Activated naive CD4-positive, alpha-beta T cell treated with anti-CD3 and anti-CD28 coated beads for 36 hours (primary cell): ENCODE measurements at regions of chr10 and their contacts with region 1.

Region 1: DNA sequence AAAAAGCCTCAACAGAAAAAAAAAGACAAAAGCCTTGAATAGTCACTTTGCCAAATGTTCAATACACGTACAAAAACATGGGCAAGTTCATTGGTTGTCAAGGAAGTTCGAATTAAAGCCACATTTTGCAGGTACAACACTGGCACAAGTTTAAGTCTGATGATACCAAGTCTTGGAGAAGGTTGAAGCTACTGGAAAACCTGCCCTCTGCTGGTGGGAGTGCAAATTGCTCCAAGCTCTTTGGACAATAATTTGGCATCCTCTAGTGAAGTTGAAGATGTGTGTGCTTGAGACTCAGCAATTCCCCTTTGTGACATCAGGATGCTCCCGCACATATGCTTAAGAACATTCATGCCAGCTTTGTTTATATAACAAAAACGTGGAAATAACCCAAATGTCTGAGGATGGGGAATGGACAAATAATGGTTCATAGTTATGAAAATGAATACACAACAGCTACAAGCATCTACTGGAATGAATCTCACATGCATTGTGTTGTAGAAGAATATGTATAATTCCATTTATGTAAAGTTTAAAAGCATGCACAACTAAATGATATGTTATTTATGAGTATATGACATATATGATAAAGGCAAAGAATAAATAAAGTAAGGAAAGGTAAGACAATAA is 120.0 kb upstream of the PLPP4 start:
- DNase-seq: peak; percentile 80
- H3K4me3 Mint-ChIP-seq: no peak overlapping the region
- H3K27ac Mint-ChIP-seq: no peak overlapping the region
- H3K4me1 Mint-ChIP-seq: no peaks in the 10 kb centered on the region
- H3K27me3 Mint-ChIP-seq: peaks cover 12% of the 10 kb centered on the region

Region 2: DNA sequence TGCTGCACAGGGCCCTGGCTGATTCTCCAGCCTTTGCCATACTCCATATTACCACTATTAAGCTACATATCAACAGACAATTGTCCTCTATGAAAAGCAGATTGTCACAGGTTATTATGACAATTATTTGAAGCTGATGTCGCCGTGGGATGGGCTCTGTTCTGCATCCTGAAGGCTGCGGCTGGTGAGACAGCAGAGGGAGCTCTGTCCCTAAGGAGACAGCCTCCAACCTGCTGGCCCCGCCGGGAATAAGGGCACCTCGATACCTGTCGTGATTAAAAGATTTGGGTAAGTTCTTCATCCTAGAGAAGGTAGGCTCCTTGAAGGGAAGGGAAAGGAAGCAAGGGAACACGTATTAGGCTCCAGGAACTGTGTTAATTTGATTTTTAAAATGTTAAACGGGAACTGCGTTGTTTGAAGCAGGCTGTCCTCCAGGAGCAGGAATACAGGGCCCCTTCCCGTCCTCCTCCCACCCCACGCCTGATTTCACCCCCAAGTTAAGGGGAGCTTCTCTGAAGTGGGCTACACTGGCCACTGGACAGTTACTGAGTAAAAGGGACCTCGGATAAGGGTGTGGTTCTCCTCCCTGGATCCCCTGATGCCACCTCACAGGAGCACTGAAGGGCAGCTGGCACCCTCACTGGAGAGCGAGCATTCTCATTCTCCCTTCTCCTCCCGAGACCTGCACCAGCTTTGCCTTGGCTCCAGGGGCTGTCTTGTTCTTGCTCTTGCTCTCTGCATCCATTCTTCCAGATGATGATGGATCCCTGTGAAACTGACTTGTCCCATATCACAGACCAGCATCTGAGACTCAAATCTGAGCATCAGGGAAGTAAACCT is 728.5 kb before region 1 on chr10:
- CTCF ChIA-PET with region 1: no interaction called
- intact Hi-C with region 1: loop called (anchors 1 kb)
- DNase-seq: peak; percentile 68
- H3K4me3 Mint-ChIP-seq: peak overlapping the region; percentile 33
- H3K27ac Mint-ChIP-seq: no peak overlapping the region
- H3K4me1 Mint-ChIP-seq: peaks cover 9% of the 10 kb centered on the region
- H3K27me3 Mint-ChIP-seq: no peaks in the 10 kb centered on the region

Region 3: GRCh38 chr10:119933179-119933578 is 403.8 kb before region 1 on chr10:
- CTCF ChIA-PET with region 1: no interaction called
- intact Hi-C with region 1: loop called (anchors 1 kb)
- DNase-seq: no peak
- H3K4me3 Mint-ChIP-seq: no peak overlapping the region
- H3K27ac Mint-ChIP-seq: no peak overlapping the region
- H3K4me1 Mint-ChIP-seq: peaks cover 5% of the 10 kb centered on the region
- H3K27me3 Mint-ChIP-seq: no peaks in the 10 kb centered on the region

Region 4: GRCh38 chr10:120069700-120070099 is 267.3 kb before region 1 on chr10:
- CTCF ChIA-PET with region 1: no interaction called
- intact Hi-C with region 1: loop called (anchors 10 kb)
- DNase-seq: no peak
- H3K4me3 Mint-ChIP-seq: no peak overlapping the region
- H3K27ac Mint-ChIP-seq: no peak overlapping the region
- H3K4me1 Mint-ChIP-seq: no peaks in the 10 kb centered on the region
- H3K27me3 Mint-ChIP-seq: peaks cover 20% of the 10 kb centered on the region

Region 5: DNA sequence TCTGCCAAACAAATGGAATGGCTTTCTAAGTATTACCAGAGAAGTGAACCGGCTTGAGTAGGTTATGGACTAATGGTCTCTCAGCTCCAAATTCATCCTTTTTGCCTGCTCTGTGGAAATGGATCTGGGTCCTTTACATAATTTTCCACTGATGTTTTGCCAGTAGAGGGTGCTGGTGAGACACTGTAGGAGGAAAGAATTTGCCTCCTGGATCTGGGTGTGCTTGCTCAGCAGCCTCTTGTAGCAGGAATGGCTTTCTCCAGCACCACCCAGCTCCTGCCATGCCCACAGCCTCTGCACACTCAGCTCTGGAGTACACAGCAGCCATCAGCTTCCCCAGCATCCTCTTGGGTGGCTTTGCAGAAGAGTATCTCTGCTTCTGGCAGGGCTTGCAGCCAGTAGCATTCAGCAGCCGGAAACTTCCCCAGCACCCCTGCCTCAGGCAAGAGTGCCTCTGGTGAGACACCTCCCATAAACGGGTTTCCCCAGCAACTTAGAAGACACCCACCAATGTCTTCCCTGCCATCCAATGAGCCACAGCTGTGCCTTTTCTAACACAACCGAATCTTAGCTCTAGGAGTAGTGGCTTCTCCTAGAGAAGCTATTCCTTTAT is 115.0 kb before region 1 on chr10:
- CTCF ChIA-PET with region 1: interaction called, 16 read pairs
- intact Hi-C with region 1: loop called (anchors 1 kb)
- DNase-seq: peak; percentile 37
- H3K4me3 Mint-ChIP-seq: no peak overlapping the region
- H3K27ac Mint-ChIP-seq: no peak overlapping the region
- H3K4me1 Mint-ChIP-seq: no peaks in the 10 kb centered on the region
- H3K27me3 Mint-ChIP-seq: no peaks in the 10 kb centered on the region

Region 6: DNA sequence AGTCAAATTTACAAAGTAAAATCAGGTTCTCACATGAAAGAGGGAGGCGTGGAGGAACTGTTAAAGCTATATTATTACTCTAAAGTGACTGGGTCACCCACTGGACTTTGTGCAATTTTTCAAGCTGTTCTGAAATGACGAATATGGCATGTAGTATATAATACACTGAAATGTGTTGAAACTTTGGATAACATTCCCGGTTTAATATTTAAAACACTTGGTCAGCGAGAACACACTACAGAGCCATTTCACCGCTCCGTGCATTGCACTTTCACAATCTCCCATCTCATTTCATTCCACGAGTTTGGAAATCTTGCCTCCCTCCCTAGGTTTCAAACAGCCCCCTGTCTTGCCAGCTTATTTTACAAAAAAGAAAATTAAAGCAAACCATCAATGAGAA is 852.0 kb after region 1 on chr10:
- CTCF ChIA-PET with region 1: no interaction called
- intact Hi-C with region 1: no loop called
- DNase-seq: no peak
- H3K4me3 Mint-ChIP-seq: no peak overlapping the region
- H3K27ac Mint-ChIP-seq: no peak overlapping the region
- H3K4me1 Mint-ChIP-seq: no peaks in the 10 kb centered on the region
- H3K27me3 Mint-ChIP-seq: peaks cover 3% of the 10 kb centered on the region